Activated CD8-positive, alpha-beta T cell treated with anti-CD3 and anti-CD28 coated beads, Interleukin-2, amount 10 ng/mL, durations not matched to agents 7 days and 5 days (primary cell): ENCODE measurements at regions of chr16 and their contacts with region 1.

Region 1: DNA sequence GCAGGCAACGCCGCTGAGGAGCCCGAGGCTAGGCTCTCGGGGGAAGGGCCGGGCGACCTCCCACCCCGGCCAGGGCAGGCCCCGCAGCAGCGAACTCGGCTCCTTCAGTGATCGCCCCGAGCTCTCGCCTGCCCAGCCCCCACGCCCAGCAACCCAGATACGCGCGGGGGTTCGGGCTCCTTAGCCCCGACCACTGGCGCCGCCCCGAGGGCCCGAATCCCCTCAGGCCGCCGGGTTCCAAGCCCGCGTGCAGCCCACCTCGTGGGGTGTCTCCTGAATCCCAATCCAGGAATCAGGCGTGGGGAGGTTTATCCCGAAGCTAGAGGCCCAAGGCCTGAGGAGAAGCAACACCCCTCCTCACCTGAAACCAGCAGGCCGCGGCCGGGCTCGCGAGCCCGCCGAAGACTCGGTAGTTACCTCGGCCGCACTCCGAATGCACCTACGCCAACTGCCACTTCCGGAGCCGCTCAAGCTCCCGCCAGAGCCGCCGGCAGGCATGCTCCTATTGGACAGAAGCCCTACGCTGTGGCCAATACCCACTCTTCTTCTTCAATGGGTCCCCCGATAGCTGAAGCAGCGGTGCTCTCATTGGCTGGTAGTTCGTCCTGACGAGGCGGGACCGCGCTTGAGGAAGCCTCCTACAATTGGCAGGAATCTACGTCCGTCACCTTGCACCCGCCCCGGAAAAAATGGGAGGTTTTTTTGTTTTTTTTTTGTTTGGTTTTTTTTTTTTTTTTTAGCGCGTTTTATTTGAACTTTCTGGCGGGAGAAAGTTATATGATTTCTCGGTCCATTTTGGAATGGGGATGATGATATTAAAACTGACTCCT is at the start of gene RFWD3:
- DNase-seq: peak; percentile 99
- ATAC-seq: peak; percentile 100
- H3K4me3 Mint-ChIP-seq: peak within 1 kb of the TSS; percentile 93
- H3K27ac Mint-ChIP-seq: peak within 1 kb of the TSS; percentile 97
- H3K4me1 Mint-ChIP-seq: peaks cover 49% of the 10 kb centered on the region
- H3K27me3 Mint-ChIP-seq: no peaks in the 10 kb centered on the region
- total RNA-seq, gene RFWD3: 119 to 120 TPM

Region 2: GRCh38 chr16:74296432-74297144 is 370.1 kb before region 1 on chr16 and contains the start of gene PSMD7:
- CTCF ChIA-PET with region 1: no interaction called
- POLR2A ChIA-PET with region 1: interaction called, 10 read pairs
- DNase-seq: peak; percentile 93
- ATAC-seq: peak; percentile 92
- H3K4me3 Mint-ChIP-seq: peak within 1 kb of the TSS; percentile 88
- H3K27ac Mint-ChIP-seq: peak within 1 kb of the TSS; percentile 96
- H3K4me1 Mint-ChIP-seq: peaks cover 41% of the 10 kb centered on the region
- H3K27me3 Mint-ChIP-seq: no peaks in the 10 kb centered on the region
- total RNA-seq, gene PSMD7: 95.1 to 96.1 TPM

Region 3: GRCh38 chr16:74606521-74607310 is 59.9 kb before region 1 on chr16 and contains the start of gene GLG1:
- CTCF ChIA-PET with region 1: no interaction called
- POLR2A ChIA-PET with region 1: interaction called, 28 read pairs
- DNase-seq: peak; percentile 93
- ATAC-seq: peak; percentile 91
- H3K4me3 Mint-ChIP-seq: peak within 1 kb of the TSS; percentile 88
- H3K27ac Mint-ChIP-seq: peak within 1 kb of the TSS; percentile 89
- H3K4me1 Mint-ChIP-seq: peaks cover 64% of the 10 kb centered on the region
- H3K27me3 Mint-ChIP-seq: no peaks in the 10 kb centered on the region
- total RNA-seq, gene GLG1: 110 to 112 TPM

Region 4: DNA sequence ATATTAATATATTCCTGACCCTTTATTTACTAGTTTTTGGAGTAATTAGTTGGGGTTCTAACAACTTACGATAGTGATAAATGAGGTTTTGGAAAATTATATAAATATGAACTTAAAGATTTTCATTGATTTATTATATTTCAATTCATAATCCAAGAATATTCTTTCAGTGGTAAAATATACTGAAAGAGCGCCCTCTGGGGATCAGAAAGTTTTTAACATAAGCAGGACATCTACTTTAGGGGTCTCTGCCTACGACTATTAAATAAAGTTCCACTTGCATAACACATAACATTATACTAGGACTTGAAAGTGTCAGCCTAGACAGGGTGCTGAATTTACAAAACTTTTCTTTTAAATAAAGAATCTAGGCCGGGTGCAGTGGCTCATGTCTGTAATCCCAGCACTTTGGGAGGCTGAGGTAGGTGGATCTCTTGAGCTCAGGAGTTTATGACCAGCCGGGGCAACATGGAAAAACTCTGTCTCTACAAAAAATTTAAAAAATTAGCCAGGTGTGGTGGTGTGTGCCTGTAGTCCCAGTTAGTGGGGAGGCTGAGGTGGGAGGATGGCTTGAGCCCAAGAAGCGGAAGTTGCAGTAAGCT is 15.6 kb before region 1 on chr16:
- CTCF ChIA-PET with region 1: interaction called, 25 read pairs
- POLR2A ChIA-PET with region 1: interaction called, 23 read pairs
- DNase-seq: no peak
- ATAC-seq: no peak
- H3K4me3 Mint-ChIP-seq: no peak overlapping the region
- H3K27ac Mint-ChIP-seq: peak overlapping the region; percentile 48
- H3K4me1 Mint-ChIP-seq: peaks cover 30% of the 10 kb centered on the region
- H3K27me3 Mint-ChIP-seq: no peaks in the 10 kb centered on the region

Region 5: DNA sequence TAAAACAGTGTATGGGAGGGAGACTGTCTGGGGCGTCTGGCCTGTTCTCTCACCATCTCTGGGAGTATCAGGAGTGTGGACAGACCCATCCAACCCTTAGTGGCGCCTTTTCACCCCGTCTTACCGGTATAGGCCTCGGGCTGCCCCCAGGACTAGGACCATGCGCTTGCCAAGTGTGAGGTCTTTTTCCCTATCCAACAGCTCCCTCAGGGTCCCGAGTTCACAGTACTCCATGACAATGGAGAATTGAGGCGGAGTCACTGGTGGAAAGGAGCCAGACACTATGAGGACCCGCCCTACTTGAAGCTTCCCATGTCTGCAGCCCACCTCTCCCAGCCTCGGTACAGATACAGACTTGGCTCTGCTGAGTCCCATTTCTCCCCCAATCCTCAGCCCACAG is 15.9 kb after region 1 on chr16:
- CTCF ChIA-PET with region 1: no interaction called
- POLR2A ChIA-PET with region 1: interaction called, 44 read pairs
- DNase-seq: no peak
- ATAC-seq: no peak
- H3K4me3 Mint-ChIP-seq: no peak overlapping the region
- H3K27ac Mint-ChIP-seq: no peak overlapping the region
- H3K4me1 Mint-ChIP-seq: no peaks in the 10 kb centered on the region
- H3K27me3 Mint-ChIP-seq: no peaks in the 10 kb centered on the region

Region 6: DNA sequence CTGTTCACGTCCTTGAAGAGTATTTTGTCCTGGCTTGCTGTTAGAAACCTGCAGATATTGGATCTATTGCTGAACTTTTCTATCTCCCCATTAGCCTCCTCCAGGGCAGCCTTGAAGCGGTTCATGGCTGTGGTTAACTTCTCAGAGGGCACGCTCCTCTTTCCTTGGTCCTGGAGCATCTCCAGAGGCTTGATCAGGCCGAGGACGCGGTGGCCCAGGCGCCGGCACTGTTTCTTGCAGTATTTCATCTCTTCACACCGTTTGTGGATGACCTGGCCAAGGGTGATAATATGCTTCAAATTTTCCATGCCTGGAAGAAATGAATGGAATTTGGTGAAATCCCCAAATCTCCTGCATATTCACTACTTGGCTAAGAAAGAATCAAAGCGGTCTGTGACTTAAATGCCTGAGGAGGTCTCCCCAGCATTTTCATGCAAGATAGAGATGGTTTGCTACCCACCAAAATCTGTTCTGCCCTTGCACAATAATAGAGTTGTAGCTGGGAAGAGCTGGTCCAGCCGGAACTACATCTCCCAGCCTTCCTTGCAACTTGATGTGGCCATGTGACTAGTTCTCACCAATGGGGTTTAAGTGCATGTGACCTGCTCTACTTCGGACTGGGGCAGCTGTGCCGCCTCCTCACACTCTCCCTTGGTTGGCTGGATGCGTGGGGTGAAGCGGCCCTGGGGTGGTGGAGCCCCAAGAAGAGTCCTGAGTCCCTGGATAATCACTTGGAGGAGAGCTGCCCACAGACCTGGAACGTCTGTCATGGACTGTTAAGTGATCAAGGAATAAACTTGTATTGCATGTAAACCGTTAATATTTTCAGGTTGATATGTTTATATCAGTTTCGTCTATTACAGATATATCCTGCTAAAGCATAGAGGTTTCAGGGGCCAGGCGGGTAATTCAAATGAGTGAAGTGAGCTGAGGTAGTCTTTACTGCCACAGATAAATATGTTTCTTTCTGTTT is 29.1 kb after region 1 on chr16:
- CTCF ChIA-PET with region 1: interaction called, 24 read pairs
- POLR2A ChIA-PET with region 1: interaction called, 91 read pairs
- DNase-seq: peak; percentile 79
- ATAC-seq: peak; percentile 74
- H3K4me3 Mint-ChIP-seq: peak overlapping the region; percentile 74
- H3K27ac Mint-ChIP-seq: peak overlapping the region; percentile 60
- H3K4me1 Mint-ChIP-seq: peaks cover 46% of the 10 kb centered on the region
- H3K27me3 Mint-ChIP-seq: no peaks in the 10 kb centered on the region